ENCODE measurements at regions of chr2 and their contacts with region 1.

Region 1: DNA sequence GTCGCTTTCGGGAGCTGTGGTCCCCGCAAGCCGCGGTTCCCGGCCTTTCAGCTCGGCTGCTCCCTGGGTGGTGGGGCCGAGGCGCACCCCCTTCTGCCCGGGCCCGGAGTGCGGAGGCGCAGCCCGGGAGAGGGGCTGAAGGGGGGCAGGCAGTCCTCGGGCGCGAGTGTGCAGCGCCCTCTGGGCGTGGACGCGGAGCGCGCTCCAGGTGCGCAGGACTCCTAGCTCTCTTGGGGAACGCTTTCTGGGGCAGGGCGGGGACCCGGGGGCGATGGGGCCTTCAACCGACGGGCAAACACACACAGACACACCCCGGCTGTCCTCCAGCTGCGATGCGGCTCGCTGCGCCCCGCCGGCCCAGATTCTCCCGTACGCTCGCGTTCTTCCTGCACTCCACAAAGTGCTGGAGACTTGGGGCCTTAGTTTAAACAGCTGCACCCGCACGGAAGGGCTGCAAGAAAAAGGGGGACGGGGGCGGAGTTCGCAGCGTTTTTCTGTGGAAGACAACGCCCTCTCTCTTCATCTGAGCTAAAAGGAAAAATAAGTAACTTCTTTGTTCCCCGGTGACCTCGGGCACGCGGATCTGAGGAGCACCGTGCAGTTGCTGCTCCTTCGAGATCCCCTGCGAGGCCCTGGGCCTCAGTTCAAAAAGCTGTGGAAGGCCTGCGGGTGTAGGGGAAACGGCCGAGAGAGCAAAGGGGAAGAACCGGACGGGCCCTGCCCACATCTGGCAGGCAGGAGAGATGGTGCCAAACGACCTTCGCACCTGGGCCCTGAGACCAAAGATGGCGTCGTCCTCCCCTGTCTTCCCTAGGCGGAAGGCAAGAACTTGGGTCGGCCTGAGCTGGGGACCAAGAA is 593 bp upstream of the SDC1 start:
- DNase-seq: peak; percentile 84 to 88
- ATAC-seq: peak; percentile 65 to 87
- H3K4me3 ChIP-seq: peak overlapping the region; percentile 95
- H3K27ac ChIP-seq: peak overlapping the region; percentile 96 to 97
- H3K4me1 ChIP-seq: peaks cover 33% of the 10 kb centered on the region
- CTCF ChIP-seq: peak; percentile 93
- EP300 ChIP-seq: no peak
- POLR2A ChIP-seq: no peak
- RAD21 ChIP-seq: peak; percentile 79 to 96

Region 2: GRCh38 chr2:19722531-19722971 is 503.0 kb before region 1 on chr2:
- CTCF ChIA-PET with region 1: no interaction called
- POLR2A ChIA-PET with region 1: no interaction called
- DNase-seq: no peak
- ATAC-seq: no peak
- H3K4me3 ChIP-seq: no peak overlapping the region
- H3K27ac ChIP-seq: no peak overlapping the region
- H3K4me1 ChIP-seq: no peaks in the 10 kb centered on the region
- CTCF ChIP-seq: no peak
- EP300 ChIP-seq: no peak
- POLR2A ChIP-seq: no peak
- RAD21 ChIP-seq: no peak

Region 3: DNA sequence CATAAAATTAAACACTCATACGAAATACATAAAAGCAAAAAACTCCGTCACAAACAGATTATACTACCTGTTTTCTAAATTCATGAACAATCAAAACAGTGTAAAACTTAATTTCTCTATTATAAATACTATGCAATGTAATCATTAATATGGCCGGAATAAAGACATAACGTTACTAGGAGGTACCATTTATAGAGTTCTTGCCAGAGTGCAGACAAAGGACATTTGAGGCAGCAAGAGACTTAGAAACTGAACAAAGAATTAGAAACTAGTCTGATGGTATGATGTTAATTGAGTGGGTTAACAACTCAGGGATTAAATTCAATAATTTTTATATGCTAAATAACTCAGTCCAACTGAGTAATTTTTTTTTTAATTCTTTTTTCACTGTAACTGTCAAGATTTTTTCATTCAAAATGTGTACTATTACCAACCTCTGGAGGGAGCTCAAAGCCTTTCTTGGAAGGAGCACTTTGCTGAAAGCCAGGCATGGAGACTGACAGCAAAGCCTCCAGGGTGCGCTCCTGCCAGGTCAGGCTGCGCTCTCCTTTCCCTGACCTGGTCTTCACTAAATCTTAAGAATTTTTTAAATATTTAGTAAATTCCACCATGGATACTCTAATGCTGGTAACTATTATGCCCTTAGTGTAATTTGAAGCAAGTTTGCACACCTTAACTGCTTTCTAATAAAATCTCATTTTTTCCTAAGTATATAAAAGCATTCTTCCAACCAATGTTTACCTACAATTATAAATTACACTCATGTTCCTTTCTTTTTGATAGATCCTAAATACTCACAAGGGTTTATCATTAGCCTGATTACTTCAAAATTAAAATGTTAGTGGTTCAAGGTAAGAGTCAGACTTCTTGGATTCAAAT is 269.7 kb before region 1 on chr2:
- CTCF ChIA-PET with region 1: interaction called, 10 read pairs
- POLR2A ChIA-PET with region 1: no interaction called
- DNase-seq: peak; percentile 78 to 90
- ATAC-seq: peak; percentile 100
- H3K4me3 ChIP-seq: no peak overlapping the region
- H3K27ac ChIP-seq: no peak overlapping the region
- H3K4me1 ChIP-seq: no peaks in the 10 kb centered on the region; the same call in 2 of the 3 replicates
- CTCF ChIP-seq: peak; percentile 100
- EP300 ChIP-seq: no peak
- POLR2A ChIP-seq: no peak
- RAD21 ChIP-seq: peak; percentile 98

Region 4: GRCh38 chr2:20106746-20107145 is 118.8 kb before region 1 on chr2:
- CTCF ChIA-PET with region 1: interaction called, 149 read pairs
- POLR2A ChIA-PET with region 1: interaction called, 4 read pairs
- DNase-seq: no peak
- ATAC-seq: no peak
- H3K4me3 ChIP-seq: no peak overlapping the region
- H3K27ac ChIP-seq: no peak overlapping the region
- H3K4me1 ChIP-seq: peaks cover 32% of the 10 kb centered on the region
- CTCF ChIP-seq: peak; percentile 12; the same call in 1 of the 3 replicates
- EP300 ChIP-seq: no peak
- POLR2A ChIP-seq: no peak
- RAD21 ChIP-seq: no peak

Region 5: GRCh38 chr2:20148923-20149668 is 76.4 kb before region 1 on chr2:
- CTCF ChIA-PET with region 1: interaction called, 202 read pairs
- POLR2A ChIA-PET with region 1: no interaction called
- DNase-seq: no peak
- ATAC-seq: peak in 1 of 2 experiments; percentile 22; a peak in 2 of 6 replicates
- H3K4me3 ChIP-seq: no peak overlapping the region
- H3K27ac ChIP-seq: peak overlapping the region; percentile 12 to 61; a peak in 3 of 6 replicates
- H3K4me1 ChIP-seq: peaks cover 26% of the 10 kb centered on the region
- CTCF ChIP-seq: no peak
- EP300 ChIP-seq: no peak
- POLR2A ChIP-seq: no peak
- RAD21 ChIP-seq: no peak

Region 6: DNA sequence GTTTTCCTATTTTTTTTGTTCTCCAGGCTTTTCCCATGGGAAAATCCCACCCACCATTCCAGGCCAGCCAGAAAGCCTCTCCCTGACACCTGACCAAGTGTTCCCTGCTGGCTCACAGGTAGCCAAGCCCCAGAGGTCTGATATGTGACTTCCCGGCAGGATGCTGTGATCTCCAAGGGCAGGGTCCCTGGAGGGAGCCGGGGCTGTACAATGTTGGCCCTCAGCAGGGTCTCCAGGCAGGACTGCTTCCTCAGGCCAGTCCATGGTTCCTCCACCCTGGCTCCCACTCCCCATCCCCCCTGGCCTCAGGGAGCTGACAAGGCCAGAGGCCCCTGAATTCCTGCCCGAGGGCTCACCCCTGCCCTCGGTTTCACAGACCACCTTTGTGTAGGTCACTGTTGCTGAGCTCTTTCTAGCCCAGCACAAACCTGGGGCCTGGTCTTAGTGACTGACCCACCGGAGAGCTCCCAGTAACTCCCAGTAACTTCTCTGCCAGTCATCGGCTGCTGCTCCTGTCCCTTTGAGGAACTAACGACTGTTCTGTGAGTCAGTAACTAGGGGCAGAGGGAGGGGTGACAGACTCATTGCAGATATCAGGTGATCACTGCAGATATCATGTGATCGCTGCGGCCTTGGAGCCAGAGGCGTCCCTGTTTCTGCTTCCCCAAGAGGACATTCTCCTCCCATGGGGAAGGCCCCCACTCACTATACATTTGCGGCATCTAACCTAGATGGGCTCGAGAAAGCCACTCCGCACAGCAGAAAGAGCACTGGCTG is 39.3 kb before region 1 on chr2:
- CTCF ChIA-PET with region 1: interaction called, 81 read pairs
- POLR2A ChIA-PET with region 1: interaction called, 3 read pairs
- DNase-seq: peak; percentile 42 to 64
- ATAC-seq: no peak
- H3K4me3 ChIP-seq: no peak overlapping the region
- H3K27ac ChIP-seq: peak overlapping the region; percentile 90 to 98
- H3K4me1 ChIP-seq: peaks cover 65% of the 10 kb centered on the region
- CTCF ChIP-seq: no peak
- EP300 ChIP-seq: no peak
- POLR2A ChIP-seq: no peak
- RAD21 ChIP-seq: no peak

Region 7: GRCh38 chr2:20282916-20283592 is 57.5 kb after region 1 on chr2:
- CTCF ChIA-PET with region 1: interaction called, 10 read pairs
- POLR2A ChIA-PET with region 1: no interaction called
- DNase-seq: no peak
- ATAC-seq: no peak; a peak in 2 of 6 replicates
- H3K4me3 ChIP-seq: no peak overlapping the region
- H3K27ac ChIP-seq: no peak overlapping the region
- H3K4me1 ChIP-seq: no peaks in the 10 kb centered on the region
- CTCF ChIP-seq: no peak
- EP300 ChIP-seq: no peak
- POLR2A ChIP-seq: no peak
- RAD21 ChIP-seq: no peak

Measured in A549 (cell line).